ENCODE measurements at regions of chr4 and their contacts with region 1.

Region 1: DNA sequence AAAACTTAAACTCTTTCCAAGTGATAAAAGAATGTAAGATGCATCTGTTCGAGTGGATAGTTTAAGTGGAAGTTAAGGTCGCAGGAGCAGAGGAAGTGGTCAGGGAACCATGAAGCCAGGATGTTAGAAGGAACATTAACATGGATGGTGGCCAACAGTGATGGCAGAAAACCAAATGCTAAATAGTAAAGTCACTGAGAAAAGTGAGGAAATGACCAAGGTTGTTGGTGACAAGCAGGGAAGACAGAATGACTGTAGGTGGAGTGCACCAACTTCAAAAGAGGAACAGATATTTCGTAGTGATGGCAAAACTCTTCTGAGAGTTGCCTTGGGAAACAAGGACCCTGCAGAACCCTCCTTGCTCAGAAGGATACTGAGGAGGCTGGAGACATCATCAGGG is 226.2 kb downstream of the PALLD start:
- DNase-seq: no peak
- ATAC-seq: no peak
- H3K4me3 ChIP-seq: no peak overlapping the region
- H3K27ac ChIP-seq: peak overlapping the region in 1 of 2 donors; percentile 17
- H3K4me1 ChIP-seq: peaks cover 2% of the 10 kb centered on the region in 2 donors
- H3K27me3 ChIP-seq: no peaks in the 10 kb centered on the region

Region 2: GRCh38 chr4:168685136-168685809 is 37.7 kb before region 1 on chr4:
- intact Hi-C with region 1: no loop called
- DNase-seq: no peak
- ATAC-seq: no peak
- H3K4me3 ChIP-seq: no peak overlapping the region
- H3K27ac ChIP-seq: no peak overlapping the region
- H3K4me1 ChIP-seq: no peaks in the 10 kb centered on the region
- H3K27me3 ChIP-seq: no peaks in the 10 kb centered on the region

Region 3: DNA sequence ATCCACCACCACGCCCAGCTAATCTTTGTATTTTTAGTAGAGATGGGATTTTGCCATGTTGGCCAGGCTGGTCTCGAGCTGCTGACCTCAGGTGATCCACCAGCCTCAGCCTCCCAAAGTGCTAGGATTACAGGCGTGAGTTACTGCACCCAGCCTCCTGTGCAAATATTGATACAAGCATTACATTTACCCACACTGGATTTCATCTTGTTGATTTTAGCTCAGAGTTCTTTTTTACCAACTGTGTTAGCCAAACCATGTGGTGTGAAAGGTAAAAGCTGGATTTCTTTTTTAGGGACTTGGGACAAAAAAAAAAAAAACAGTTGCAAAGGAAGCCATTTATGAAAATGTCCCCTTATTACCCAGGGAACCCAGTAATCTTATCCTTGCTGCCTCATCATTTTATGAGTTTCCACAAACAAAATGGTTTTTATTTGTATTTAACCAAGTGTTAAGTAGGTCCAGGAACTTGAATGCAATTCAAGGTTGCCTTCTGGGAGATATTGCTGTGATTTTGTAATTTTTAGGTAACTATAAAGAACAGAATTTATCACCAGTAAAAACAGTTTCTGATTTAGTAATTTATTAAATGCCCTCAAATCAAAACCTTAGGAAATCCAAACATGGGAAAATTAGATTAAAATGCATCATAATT is 23.7 kb before region 1 on chr4:
- intact Hi-C with region 1: no loop called
- DNase-seq: no peak
- ATAC-seq: no peak
- H3K4me3 ChIP-seq: no peak overlapping the region
- H3K27ac ChIP-seq: no peak overlapping the region
- H3K4me1 ChIP-seq: no peaks in the 10 kb centered on the region
- H3K27me3 ChIP-seq: no peaks in the 10 kb centered on the region

Region 4: DNA sequence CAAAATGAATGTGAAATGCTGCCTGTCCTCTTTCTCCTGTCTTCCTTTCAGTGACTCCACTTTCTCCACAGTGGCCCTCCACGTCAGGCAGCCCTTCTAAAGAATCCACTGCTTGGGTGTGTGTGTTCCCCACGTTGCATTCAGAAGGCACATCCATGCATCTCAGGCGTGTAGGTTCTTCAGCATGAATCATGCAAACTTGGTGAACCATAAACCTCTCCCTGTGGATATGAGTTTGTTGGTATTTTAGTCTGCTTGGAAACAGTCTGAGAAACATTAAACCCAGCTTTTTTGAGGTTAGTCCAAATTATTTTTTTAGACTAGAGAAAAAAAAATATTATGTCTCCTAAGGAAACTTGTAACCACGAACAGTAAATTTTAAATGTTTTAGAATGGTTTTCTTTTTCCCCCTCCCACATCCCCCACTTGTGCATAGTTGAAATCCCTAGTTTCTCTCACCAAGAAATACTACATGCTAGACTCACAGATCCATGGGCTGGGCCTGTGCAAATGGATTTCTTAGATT is 35.4 kb after region 1 on chr4:
- intact Hi-C with region 1: loop called (anchors 5 to 10 kb)
- DNase-seq: no peak
- ATAC-seq: peak; percentile 73
- H3K4me3 ChIP-seq: no peak overlapping the region
- H3K27ac ChIP-seq: peak overlapping the region; percentile 82 to 91
- H3K4me1 ChIP-seq: no peaks in the 10 kb centered on the region
- H3K27me3 ChIP-seq: no peaks in the 10 kb centered on the region

Region 5: DNA sequence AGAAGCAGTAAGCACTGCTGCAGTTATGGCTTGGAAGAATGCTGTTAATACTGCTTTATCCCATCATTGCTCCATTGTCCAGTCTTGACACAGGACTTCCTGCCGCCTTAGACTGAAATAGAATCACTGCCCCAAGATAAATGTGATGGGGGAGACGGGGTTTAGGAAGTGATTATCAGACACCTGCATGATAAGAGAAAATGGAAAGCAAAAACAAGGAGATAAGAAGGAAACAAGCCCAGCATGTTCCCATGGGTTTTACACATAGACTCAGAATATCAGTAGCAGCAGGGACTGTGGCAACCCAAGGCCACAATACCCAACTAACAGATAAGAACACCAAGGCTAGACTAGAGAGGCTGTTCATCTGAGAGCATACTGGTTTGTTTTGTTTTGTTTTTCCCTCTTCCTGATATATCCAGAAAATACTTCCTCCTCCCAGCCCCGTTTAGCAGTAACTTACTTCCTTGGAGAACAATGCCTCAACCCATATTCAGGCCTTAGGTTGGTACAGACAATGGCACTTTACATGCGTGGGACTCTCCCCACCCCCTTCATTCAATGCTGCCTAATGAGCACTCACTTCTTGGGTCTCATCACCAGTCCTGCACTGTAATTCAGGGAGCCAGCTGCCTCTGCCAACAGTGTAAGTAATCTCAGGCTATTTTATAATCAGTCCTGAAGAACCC is 54.4 kb after region 1 on chr4:
- intact Hi-C with region 1: no loop called
- DNase-seq: no peak
- ATAC-seq: no peak
- H3K4me3 ChIP-seq: no peak overlapping the region
- H3K27ac ChIP-seq: no peak overlapping the region
- H3K4me1 ChIP-seq: no peaks in the 10 kb centered on the region
- H3K27me3 ChIP-seq: no peaks in the 10 kb centered on the region

Region 6: GRCh38 chr4:169179609-169180521 is 456.8 kb after region 1 on chr4:
- intact Hi-C with region 1: no loop called
- DNase-seq: no peak
- ATAC-seq: no peak
- H3K4me3 ChIP-seq: peak overlapping the region in 1 of 2 donors; percentile 41
- H3K27ac ChIP-seq: peak overlapping the region in 1 of 2 donors; percentile 16
- H3K4me1 ChIP-seq: peaks cover 2 to 3% of the 10 kb centered on the region in 2 donors
- H3K27me3 ChIP-seq: no peaks in the 10 kb centered on the region

Measured in aorta (tissue), 5 donors.